Tibial artery (tissue), 4 donors: ENCODE measurements at regions of chr13 and their contacts with region 1.

Region 1: DNA sequence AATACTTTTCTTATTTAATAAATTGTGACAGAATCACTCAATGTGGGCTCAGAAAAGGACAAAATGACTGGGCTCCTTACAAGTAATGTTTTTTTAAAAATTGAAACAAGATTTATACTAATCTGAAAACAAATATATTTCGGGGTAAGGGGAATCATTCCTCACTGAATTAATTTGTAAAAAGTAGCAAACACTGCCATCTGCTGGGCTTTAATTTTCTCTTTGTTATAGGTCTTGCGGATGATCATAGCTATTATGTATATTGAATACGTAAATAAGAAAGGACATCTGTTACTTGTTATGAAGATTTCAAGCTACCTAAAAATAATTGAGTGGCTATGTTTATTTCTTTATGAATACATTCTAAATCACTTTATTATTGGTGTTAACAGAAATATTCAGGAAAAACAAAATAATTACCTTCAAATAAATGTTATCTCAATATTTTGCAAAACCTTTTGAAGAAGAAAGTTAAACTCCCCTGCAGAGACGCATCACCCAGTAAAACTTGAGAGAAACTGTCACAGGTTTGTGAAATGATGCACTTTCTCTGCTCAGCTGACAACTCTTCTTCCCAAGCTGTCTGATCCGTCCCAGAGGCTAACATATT is 17.8 kb upstream of the ENOX1 start:
- DNase-seq: no peak
- H3K4me3 ChIP-seq: no peak overlapping the region
- H3K27ac ChIP-seq: no peak overlapping the region
- H3K4me1 ChIP-seq: peaks cover 0 to 5% (median 4%) of the 10 kb centered on the region in 4 donors
- H3K27me3 ChIP-seq: no peaks in the 10 kb centered on the region
- CTCF ChIP-seq: peak; percentile 50 to 70

Region 2: GRCh38 chr13:42594970-42595571 is 1209.5 kb before region 1 on chr13:
- intact Hi-C with region 1: loop called (anchors 10 kb)
- DNase-seq: no peak
- H3K4me3 ChIP-seq: no peak overlapping the region
- H3K27ac ChIP-seq: no peak overlapping the region
- H3K4me1 ChIP-seq: no peaks in the 10 kb centered on the region
- H3K27me3 ChIP-seq: no peaks in the 10 kb centered on the region
- CTCF ChIP-seq: peak; percentile 65 to 74

Region 3: GRCh38 chr13:42969558-42970172 is 834.9 kb before region 1 on chr13:
- intact Hi-C with region 1: loop called (anchors 10 kb)
- DNase-seq: peak; percentile 75 to 81
- H3K4me3 ChIP-seq: no peak overlapping the region
- H3K27ac ChIP-seq: no peak overlapping the region
- H3K4me1 ChIP-seq: peaks cover 0 to 3% (median 0%) of the 10 kb centered on the region in 4 donors
- H3K27me3 ChIP-seq: no peaks in the 10 kb centered on the region
- CTCF ChIP-seq: peak; percentile 66 to 68

Region 4: DNA sequence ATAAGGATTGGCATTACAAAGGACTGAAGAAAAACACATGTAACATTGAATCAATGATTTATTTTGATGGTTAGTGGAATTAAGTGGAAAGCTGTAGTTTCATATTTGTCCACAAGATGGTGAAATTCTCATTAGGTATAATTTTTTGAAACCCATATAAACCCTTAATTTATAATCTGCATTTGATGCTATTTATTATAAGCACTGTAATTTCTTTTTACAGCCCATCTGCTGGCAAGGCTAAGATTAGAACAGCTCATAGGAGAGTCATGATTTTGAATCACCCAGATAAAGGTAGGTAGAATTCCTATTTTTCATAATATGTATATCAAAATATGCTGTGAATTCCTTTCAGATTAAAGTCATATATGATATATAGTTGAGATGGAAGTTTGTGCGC is 719.0 kb before region 1 on chr13:
- intact Hi-C with region 1: loop called (anchors 10 kb)
- DNase-seq: no peak
- H3K4me3 ChIP-seq: no peak overlapping the region
- H3K27ac ChIP-seq: no peak overlapping the region
- H3K4me1 ChIP-seq: no peaks in the 10 kb centered on the region
- H3K27me3 ChIP-seq: no peaks in the 10 kb centered on the region
- CTCF ChIP-seq: peak; percentile 56 to 58

Region 5: GRCh38 chr13:43303033-43303729 is 501.4 kb before region 1 on chr13:
- intact Hi-C with region 1: loop called (anchors 10 kb)
- DNase-seq: peak; percentile 34 to 70
- H3K4me3 ChIP-seq: no peak overlapping the region
- H3K27ac ChIP-seq: no peak overlapping the region
- H3K4me1 ChIP-seq: peaks cover 0 to 7% (median 3%) of the 10 kb centered on the region in 4 donors
- H3K27me3 ChIP-seq: no peaks in the 10 kb centered on the region
- CTCF ChIP-seq: peak; percentile 56 to 58

Region 6: DNA sequence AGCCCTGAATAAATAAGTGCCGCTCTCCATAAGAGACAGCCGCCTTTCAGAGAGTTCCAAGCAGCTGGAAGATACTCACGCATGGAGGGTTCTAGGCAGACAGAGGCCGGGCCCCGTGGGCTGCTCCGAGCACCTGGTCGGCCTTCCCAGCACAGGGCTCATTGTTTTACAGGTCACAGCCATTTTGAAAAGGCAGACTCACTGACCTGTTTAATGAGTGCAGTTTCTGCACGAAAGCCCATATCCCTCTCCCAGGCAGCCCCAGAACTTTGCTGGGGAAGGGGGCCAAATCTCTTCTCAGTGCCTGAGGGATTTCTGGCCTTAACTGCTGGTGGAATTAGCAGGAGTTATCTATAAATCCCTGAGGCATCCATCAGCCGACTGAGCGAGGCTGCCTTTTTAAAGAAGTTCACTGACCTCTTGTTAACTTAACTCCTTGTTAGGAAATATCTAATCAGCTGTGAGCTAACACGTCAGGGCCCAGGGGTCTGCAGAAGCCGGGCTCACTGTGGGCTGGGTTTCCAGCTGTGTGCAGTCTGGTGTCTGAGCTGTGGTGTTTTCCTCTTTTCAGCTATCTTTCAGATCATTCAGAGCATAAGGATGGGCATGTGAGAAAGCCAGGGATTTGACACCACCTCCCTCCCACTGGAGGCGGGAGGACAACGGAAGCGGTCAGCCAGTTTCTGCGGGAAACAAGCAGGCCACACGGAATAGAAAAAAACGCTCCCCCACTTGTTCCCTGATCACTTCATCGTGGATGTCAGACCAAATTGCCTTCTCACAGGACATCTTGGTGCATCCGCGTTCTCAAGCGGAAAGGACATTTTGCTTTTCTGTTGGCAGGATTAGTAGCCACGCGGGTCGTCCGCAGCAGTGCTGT is 592.4 kb after region 1 on chr13:
- intact Hi-C with region 1: no loop called
- DNase-seq: no peak
- H3K4me3 ChIP-seq: peak overlapping the region in 1 of 2 donors; percentile 10
- H3K27ac ChIP-seq: no peak overlapping the region
- H3K4me1 ChIP-seq: no peaks in the 10 kb centered on the region
- H3K27me3 ChIP-seq: no peaks in the 10 kb centered on the region
- CTCF ChIP-seq: no peak